Heart left ventricle (tissue), 16 donors: ENCODE measurements at regions of chr7 and their contacts with region 1.

Region 1: DNA sequence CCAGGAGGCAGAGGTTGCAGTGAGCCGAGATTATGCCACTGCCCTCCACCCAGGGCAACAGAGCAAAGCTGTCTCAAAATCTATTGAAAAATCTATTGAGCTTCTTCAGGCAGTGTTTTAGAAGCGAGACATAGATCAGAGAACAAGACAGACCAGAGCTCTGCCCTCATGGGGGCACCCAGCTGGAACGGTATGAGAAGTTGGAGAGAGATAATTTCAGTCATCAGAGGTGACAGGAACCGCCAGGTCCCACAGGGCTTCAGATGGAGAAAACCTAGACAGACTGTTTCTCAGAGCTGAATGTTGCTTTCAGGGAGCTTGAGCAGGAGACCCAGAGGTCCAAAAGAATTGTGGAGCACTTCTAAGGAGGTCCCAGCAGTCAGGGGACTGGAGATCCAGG is 14.2 kb upstream of the GTF2IRD1 start:
- DNase-seq: peak in 2 of 5 donors; percentile 2 to 32
- ATAC-seq: no peak
- H3K4me3 ChIP-seq: no peak overlapping the region
- H3K27ac ChIP-seq: no peak overlapping the region
- H3K4me1 ChIP-seq: no peaks in the 10 kb centered on the region
- H3K27me3 ChIP-seq: peaks cover 0 to 3% (median 0%) of the 10 kb centered on the region in 9 donors
- CTCF ChIP-seq: no peak
- POLR2A ChIP-seq: no peak

Region 2: DNA sequence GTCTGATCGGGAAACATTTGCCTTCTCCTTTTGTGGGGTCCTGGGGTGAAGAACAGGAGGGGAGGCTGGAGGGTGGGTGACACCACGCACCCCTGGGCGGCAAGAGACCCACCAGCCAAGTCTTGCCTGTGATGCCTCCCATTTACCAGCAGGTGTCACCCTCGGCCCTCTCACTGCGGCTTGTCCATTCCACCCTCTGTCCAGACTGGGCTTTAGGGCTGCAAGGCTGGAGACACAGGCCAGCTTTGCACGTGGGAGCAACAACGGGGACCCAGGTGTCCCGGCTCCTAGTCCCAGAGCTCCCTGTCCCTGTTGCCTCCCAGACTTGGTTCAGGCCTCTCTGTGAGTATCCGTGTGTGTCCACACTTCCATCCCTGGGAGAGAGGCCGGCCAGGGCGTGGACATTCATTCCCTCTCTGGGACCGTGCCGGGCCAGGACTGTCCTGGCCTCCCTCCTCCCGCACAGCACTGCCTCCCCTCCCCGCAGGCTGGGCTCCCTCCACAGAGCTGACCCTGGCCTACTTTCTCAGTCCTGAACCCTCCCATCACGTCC is 22.1 kb before region 1 on chr7:
- intact Hi-C with region 1: no loop called
- DNase-seq: peak; percentile 59 to 83 (median 68)
- ATAC-seq: peak; percentile 71 to 96 (median 94)
- H3K4me3 ChIP-seq: no peak overlapping the region
- H3K27ac ChIP-seq: no peak overlapping the region
- H3K4me1 ChIP-seq: peaks cover 0 to 6% (median 0%) of the 10 kb centered on the region in 12 donors
- H3K27me3 ChIP-seq: peaks cover 0 to 4% (median 0%) of the 10 kb centered on the region in 9 donors
- CTCF ChIP-seq: peak; percentile 86 to 99 (median 96)
- POLR2A ChIP-seq: no peak

Region 3: GRCh38 chr7:74501298-74501697 is 61.8 kb after region 1 on chr7:
- intact Hi-C with region 1: no loop called
- DNase-seq: peak; percentile 74 to 82 (median 80)
- ATAC-seq: peak; percentile 49 to 85 (median 72)
- H3K4me3 ChIP-seq: peak overlapping the region in 4 of 12 donors; percentile 19 to 44 (median 29)
- H3K27ac ChIP-seq: peak overlapping the region; percentile 27 to 90 (median 70)
- H3K4me1 ChIP-seq: peaks cover 0 to 24% (median 7%) of the 10 kb centered on the region in 12 donors
- H3K27me3 ChIP-seq: no peaks in the 10 kb centered on the region
- CTCF ChIP-seq: no peak
- POLR2A ChIP-seq: no peak

Region 4: GRCh38 chr7:74561898-74562613 is 122.5 kb after region 1 on chr7:
- intact Hi-C with region 1: loop called in 1 of 10 experiments (anchors 5 kb)
- DNase-seq: no peak
- ATAC-seq: no peak
- H3K4me3 ChIP-seq: no peak overlapping the region
- H3K27ac ChIP-seq: no peak overlapping the region
- H3K4me1 ChIP-seq: no peaks in the 10 kb centered on the region
- H3K27me3 ChIP-seq: no peaks in the 10 kb centered on the region
- CTCF ChIP-seq: no peak
- POLR2A ChIP-seq: no peak